ENCODE measurements at regions of chr1 and their contacts with region 1.

Region 1: DNA sequence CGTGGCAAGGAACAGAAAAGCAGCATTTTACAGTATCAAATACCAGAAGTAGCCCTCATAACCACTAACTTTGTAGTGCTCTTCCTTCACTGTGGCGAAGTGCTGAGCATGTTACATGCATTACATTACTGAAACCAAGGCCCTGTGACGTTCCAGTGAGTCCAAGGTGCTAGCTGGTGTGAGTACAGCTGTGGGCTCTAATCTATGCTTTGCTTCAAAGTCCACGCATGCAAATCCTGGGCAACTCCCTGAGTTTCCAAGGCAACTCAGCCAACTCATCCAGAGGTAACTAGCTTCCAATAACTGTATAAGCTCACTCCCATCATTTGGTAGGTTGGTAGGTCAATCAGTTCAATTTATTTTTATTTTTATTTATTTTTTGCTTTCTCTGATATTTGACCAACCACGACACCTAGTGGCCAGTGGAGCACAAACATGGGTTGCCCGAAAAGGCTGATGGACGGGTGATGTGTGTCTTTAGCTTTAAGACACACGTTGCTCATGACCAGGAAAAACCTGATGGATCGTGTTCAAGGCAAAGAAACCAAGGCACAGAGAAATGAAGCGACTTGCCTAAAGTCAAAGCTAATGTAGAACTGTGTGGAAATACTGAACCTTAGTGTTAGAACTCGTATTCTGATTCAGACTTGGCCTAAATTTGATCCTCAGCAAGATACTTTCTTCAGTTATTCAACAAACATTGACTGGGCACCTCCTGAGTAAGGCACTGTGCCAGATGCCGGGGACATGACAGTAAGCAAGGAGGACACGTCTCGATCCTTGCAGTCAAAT is 73.0 kb downstream of the GNG12 start:
- DNase-seq: no peak
- H3K4me3 ChIP-seq: no peak overlapping the region
- H3K27ac ChIP-seq: peak overlapping the region; percentile 66 to 83 (median 72)
- H3K4me1 ChIP-seq: peaks cover 0 to 41% (median 9%) of the 10 kb centered on the region in 3 donors
- H3K27me3 ChIP-seq: no peaks in the 10 kb centered on the region
- CTCF ChIP-seq: peak; percentile 77 to 94 (median 88)
- POLR2A ChIP-seq: no peak

Region 2: DNA sequence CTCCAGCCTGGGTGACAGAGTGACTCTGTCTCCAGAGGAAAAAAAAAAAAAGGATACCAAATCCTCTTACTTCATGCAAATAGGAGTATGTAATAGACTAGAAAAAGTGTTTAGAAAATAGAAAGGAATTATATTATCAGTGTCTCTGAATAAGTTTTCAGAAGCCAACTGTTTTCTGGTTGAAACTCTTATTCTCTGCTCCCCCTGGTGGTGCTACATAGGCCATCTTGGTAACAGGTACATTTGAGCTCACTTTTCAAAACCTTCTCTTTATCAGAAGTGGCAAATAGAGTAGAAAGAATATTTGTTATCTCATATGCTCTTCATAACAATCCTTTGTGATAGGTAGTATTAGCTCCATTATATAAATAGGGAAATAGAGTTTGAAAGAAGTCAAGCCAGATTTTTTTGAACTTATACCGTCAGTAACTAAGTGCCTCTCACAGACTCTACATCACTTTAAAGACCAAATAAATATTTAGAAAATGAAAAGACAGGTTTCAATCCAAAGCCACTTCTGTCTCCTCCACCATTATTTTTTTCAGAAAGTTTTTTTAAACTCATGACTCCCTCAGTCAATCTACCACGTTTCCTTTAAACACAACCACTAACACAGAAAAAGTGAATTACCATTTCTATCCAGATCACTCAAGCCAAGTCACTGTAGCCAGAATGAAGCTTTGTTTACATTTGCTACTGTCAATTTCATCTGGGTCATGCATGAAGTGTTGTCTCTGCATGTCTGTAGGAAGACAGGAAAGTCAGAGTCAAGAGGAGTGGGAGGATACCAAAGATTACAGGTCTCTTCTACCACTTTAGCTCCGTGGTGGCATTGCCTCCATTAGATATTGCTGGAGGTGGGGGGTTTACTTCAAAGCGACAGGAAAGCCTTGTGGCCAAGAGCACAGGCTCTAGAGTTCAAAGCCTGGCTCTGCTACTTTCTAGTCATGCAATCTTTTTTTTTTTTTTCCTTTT is 548.4 kb before region 1 on chr1:
- intact Hi-C with region 1: no loop called
- DNase-seq: no peak
- H3K4me3 ChIP-seq: no peak overlapping the region
- H3K27ac ChIP-seq: no peak overlapping the region
- H3K4me1 ChIP-seq: peaks cover 0 to 28% (median 0%) of the 10 kb centered on the region in 3 donors
- H3K27me3 ChIP-seq: no peaks in the 10 kb centered on the region
- CTCF ChIP-seq: peak in 5 of 6 experiments; percentile 50 to 65 (median 59)
- POLR2A ChIP-seq: no peak

Region 3: GRCh38 chr1:67532452-67533216 is 227.6 kb before region 1 on chr1:
- intact Hi-C with region 1: loop called (anchors 5 kb)
- DNase-seq: no peak
- H3K4me3 ChIP-seq: no peak overlapping the region
- H3K27ac ChIP-seq: peak overlapping the region in 1 of 4 donors; percentile 36
- H3K4me1 ChIP-seq: peaks cover 0 to 38% (median 0%) of the 10 kb centered on the region in 3 donors
- H3K27me3 ChIP-seq: no peaks in the 10 kb centered on the region
- CTCF ChIP-seq: peak; percentile 59 to 83 (median 75)
- POLR2A ChIP-seq: no peak

Region 4: DNA sequence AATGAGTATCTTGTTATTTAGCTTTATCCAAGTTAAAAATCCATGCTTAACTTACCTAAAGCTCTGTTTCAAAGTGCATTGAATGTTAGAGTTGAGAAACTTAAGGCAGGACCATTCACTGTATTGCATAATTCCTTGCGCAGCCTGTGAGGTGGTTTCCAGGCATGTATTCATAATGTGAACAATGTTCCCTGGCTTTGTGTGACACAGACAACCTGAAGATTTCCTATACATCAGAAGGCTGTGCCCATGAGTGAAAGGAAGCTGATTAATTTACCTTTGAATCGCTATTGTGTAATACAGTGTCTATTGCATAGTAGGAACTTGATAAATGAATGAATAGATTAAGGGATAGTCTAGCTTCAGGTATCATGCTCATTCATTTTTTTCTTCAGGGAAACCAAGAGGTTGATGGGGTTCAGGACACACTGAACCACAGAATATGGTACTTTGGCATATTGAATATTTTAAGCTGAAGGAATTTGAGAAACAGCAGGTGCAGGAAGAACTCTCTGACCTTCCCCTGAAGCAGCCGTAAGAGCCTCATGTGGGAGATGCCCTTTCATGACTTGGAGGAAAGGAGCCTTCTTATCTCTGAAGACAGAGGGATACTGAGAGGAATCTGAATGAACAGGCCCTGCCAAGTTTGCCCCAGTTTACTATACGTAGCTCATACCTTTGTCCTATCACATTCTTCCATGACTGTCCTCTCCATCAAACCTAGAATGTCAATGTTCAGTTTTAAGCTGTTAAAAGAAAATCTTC is 161.7 kb after region 1 on chr1:
- intact Hi-C with region 1: no loop called
- DNase-seq: no peak
- H3K4me3 ChIP-seq: no peak overlapping the region
- H3K27ac ChIP-seq: no peak overlapping the region
- H3K4me1 ChIP-seq: no peaks in the 10 kb centered on the region
- H3K27me3 ChIP-seq: peaks cover 0 to 55% (median 0%) of the 10 kb centered on the region in 4 donors
- CTCF ChIP-seq: no peak
- POLR2A ChIP-seq: no peak

Measured in esophagus squamous epithelium (tissue), 5 donors.